GM12878 (cell line): ENCODE measurements at regions of chr16 and their contacts with region 1.

Region 1: DNA sequence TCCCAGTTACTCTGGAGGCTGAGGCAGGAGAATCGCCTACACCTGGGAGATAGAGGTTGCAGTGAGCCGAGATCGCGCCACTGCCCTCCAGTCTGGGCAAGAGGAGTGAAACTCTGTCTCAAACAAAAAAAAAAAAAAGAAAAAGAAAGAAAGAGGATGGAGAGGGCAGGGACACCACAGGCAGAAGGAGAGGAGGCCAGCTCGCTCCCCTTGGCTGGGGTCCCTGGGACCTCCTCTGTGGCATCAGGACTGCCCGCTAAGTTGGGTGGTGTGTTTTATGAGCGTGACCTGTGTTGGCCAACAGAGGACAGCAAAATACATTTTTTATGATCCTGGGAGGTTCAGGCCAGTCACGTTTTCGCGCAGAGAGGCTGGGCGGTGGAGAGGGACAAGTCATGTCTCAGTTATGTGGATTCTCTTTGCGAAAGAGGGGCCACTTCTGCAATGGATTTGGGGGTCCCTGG is 229.6 kb downstream of the MRTFB start:
- DNase-seq: no peak
- ATAC-seq: peak; percentile 76
- H3K4me3 ChIP-seq: 0 out of 2 replicates have a peak overlapping the region, but pooled peaks have one; percentile 78
- H3K27ac ChIP-seq: no peak overlapping the region
- H3K4me1 ChIP-seq: peaks cover 5% of the 10 kb centered on the region
- H3K27me3 ChIP-seq: no peaks in the 10 kb centered on the region
- CTCF ChIP-seq: peak; percentile 78 to 96 (median 84); a peak in 5 of 6 replicates
- EP300 ChIP-seq: no peak
- POLR2A ChIP-seq: no peak
- RAD21 ChIP-seq: peak; percentile 96

Region 2: DNA sequence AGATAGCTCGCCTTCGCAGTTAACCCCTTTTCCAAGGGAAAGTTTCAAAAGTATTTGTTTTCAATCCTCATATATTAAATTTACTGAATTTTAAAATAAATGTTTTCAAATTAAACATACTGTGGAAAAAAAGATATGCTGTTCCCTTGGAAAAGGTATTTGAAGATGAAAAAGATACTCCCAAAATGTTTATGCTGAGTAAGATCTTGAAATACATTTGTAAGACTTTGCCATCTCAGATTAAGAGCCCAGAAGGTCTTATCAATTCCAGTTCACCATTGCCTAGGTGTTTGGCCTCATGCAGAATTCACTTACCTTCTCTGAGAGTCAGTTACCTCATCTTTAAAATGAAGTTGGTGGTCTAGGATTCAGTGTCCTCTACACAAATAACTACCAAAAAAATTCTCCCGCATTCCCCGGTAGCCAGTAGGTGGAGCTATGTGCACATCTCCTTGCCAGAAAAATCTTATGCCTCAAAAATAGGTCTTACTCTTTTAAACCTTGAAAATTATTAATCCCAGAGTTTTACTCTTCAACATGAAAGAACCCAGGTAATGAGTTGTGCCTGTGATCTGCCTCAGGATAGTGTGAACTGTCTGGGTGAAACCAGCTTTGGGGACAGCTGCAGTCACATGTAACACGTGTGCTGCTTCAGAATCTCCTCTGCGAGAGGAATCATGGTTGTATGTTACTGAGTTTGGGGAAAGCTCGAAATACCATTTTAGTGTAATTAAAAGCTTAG is 51.3 kb before region 1 on chr16:
- CTCF ChIA-PET with region 1: interaction called, 13 read pairs
- POLR2A ChIA-PET with region 1: no interaction called
- RAD21 ChIA-PET with region 1: interaction called, 6 read pairs
- SMC1A ChIA-PET with region 1: interaction called, 7 read pairs
- in situ Hi-C with region 1: no loop called
- intact Hi-C with region 1: no loop called
- DNase-seq: peak; percentile 13
- ATAC-seq: peak; percentile 57; the same call in 2 of the 3 replicates
- H3K4me3 ChIP-seq: no peak overlapping the region
- H3K27ac ChIP-seq: no peak overlapping the region
- H3K4me1 ChIP-seq: no peaks in the 10 kb centered on the region
- H3K27me3 ChIP-seq: no peaks in the 10 kb centered on the region
- CTCF ChIP-seq: peak; percentile 85 to 91 (median 88)
- EP300 ChIP-seq: no peak
- POLR2A ChIP-seq: no peak
- RAD21 ChIP-seq: peak; percentile 88

Region 3: GRCh38 chr16:14354551-14355351 is 54.0 kb after region 1 on chr16:
- CTCF ChIA-PET with region 1: interaction called, 7 read pairs
- POLR2A ChIA-PET with region 1: interaction called, 6 read pairs
- RAD21 ChIA-PET with region 1: interaction called, 11 read pairs
- SMC1A ChIA-PET with region 1: interaction called, 18 read pairs
- in situ Hi-C with region 1: no loop called
- intact Hi-C with region 1: no loop called
- DNase-seq: peak; percentile 100
- ATAC-seq: peak; percentile 92
- H3K4me3 ChIP-seq: no peak overlapping the region
- H3K27ac ChIP-seq: peak overlapping the region; percentile 98
- H3K4me1 ChIP-seq: peaks cover 39% of the 10 kb centered on the region
- H3K27me3 ChIP-seq: no peaks in the 10 kb centered on the region
- CTCF ChIP-seq: no peak
- EP300 ChIP-seq: peak; percentile 98 to 99
- POLR2A ChIP-seq: no peak
- RAD21 ChIP-seq: no peak

Region 4: GRCh38 chr16:14501331-14502255 is 200.9 kb after region 1 on chr16:
- CTCF ChIA-PET with region 1: interaction called, 49 read pairs
- POLR2A ChIA-PET with region 1: interaction called, 4 read pairs
- RAD21 ChIA-PET with region 1: interaction called, 75 read pairs
- SMC1A ChIA-PET with region 1: interaction called, 95 read pairs
- in situ Hi-C with region 1: no loop called
- intact Hi-C with region 1: no loop called
- DNase-seq: peak; percentile 50
- ATAC-seq: peak; percentile 35
- H3K4me3 ChIP-seq: no peak overlapping the region
- H3K27ac ChIP-seq: peak overlapping the region; percentile 75
- H3K4me1 ChIP-seq: peaks cover 61% of the 10 kb centered on the region
- H3K27me3 ChIP-seq: no peaks in the 10 kb centered on the region
- CTCF ChIP-seq: no peak
- EP300 ChIP-seq: no peak; a peak in 1 of 4 replicates
- POLR2A ChIP-seq: no peak
- RAD21 ChIP-seq: no peak

Region 5: DNA sequence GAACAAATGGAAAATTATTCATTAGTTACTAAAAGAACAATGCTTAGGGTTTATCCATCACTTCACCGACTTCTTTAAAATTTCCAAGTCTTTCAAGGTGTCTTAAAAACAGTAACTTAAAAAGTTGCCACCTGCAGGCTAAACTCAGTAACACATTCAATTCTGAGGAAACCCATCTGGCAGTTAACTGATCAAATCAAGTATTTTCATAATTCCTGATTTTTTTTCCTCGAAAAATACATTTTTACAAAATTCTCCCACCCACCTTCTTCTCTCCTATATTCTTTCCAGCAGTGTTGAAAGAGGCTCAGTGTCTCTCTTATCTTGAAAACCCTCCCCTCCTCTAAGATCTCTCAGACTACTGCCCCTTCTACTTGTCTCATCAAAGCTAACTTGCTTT is 299.4 kb after region 1 on chr16:
- CTCF ChIA-PET with region 1: interaction called, 3 read pairs
- POLR2A ChIA-PET with region 1: no interaction called
- RAD21 ChIA-PET with region 1: no interaction called
- SMC1A ChIA-PET with region 1: no interaction called
- in situ Hi-C with region 1: no loop called
- intact Hi-C with region 1: loop called (anchors 10 kb)
- DNase-seq: no peak
- ATAC-seq: peak; percentile 61
- H3K4me3 ChIP-seq: no peak overlapping the region
- H3K27ac ChIP-seq: no peak overlapping the region
- H3K4me1 ChIP-seq: no peaks in the 10 kb centered on the region
- H3K27me3 ChIP-seq: no peaks in the 10 kb centered on the region
- CTCF ChIP-seq: peak; percentile 17 to 41 (median 33); a peak in 5 of 6 replicates
- EP300 ChIP-seq: no peak
- POLR2A ChIP-seq: no peak
- RAD21 ChIP-seq: peak; percentile 29; the same call in 1 of the 2 replicates

Region 6: GRCh38 chr16:14641926-14642325 is 341.2 kb after region 1 on chr16:
- CTCF ChIA-PET with region 1: no interaction called
- POLR2A ChIA-PET with region 1: no interaction called
- RAD21 ChIA-PET with region 1: no interaction called
- SMC1A ChIA-PET with region 1: no interaction called
- in situ Hi-C with region 1: no loop called
- intact Hi-C with region 1: no loop called
- DNase-seq: no peak
- ATAC-seq: peak; percentile 38; the same call in 2 of the 3 replicates
- H3K4me3 ChIP-seq: no peak overlapping the region
- H3K27ac ChIP-seq: no peak overlapping the region
- H3K4me1 ChIP-seq: no peaks in the 10 kb centered on the region
- H3K27me3 ChIP-seq: no peaks in the 10 kb centered on the region
- CTCF ChIP-seq: no peak
- EP300 ChIP-seq: no peak
- POLR2A ChIP-seq: no peak; the same call in 1 of the 2 replicates
- RAD21 ChIP-seq: no peak